Activated CD4-positive, alpha-beta T cell treated with anti-CD3 and anti-CD28 coated beads for 36 hours (primary cell): ENCODE measurements at regions of chr6 and their contacts with region 1.

Region 1: DNA sequence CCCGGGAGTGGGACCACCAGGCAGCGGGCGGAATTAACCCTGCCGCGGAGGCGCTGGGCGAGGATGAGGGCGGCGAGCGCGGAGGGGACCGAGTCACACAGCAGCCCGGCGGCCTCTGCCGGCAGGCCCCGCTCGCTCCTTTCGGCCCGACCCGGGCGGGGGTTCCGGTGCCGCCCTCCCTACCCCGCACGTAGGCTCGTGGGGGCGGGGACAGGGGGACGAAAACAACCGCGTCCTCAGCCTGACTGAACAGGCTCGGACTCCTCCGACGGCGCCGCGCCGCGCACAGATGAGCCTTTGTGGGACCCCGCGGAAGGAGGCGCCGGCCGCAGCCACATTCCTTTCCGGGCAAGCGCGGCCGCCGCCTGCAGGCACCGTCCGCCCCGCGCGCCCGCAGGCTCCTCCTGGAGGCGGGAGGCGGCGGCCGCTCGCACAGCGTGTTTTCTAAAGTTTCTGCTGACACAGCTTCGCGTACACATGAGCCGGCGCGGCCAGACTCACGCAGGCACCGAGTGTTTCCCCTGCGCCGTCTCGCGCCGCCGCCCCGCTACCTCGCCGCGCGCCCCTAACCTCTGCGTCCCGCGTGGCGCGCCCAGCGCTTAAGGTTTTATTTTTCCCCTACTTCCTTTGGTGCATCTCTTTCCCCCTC is 244.3 kb downstream of the ARID1B start:
- DNase-seq: peak; percentile 94
- ATAC-seq: peak; percentile 81
- H3K4me3 Mint-ChIP-seq: peak overlapping the region; percentile 88
- H3K27ac Mint-ChIP-seq: peak overlapping the region; percentile 100
- H3K4me1 Mint-ChIP-seq: peaks cover 53% of the 10 kb centered on the region
- H3K27me3 Mint-ChIP-seq: no peaks in the 10 kb centered on the region

Region 2: DNA sequence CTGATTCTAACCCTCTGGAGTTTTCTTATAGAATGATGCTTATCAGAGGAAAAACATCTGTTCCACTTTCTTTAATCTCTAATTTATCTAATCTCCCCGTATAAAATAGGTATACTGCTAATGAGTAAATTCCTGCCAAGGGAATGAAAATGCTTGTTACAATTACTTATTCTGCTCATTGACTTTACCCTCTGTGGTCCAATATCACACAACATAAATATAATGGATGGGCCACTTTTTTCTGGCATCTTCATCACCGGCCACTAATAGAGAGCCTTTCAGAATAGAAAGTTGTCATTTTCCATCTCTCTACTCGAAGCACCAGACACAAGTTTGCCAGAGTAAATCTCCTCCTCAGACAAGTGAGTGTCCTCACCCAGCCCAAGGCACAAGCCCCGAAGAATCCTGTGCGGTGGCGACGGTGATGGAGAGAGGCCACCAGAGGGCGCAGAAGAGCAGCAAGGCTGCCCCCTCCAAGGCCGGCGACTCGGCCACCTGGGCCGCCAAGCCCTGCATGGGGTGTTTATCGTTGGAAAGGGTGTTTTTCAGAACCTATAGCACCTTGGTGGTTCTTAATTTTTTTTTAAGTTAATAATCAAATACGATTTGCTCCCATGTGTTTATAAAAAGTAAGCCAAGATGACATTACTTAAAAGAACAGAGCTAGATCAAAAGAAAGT is 457.2 kb before region 1 on chr6:
- CTCF ChIA-PET with region 1: interaction called, 3 read pairs
- POLR2A ChIA-PET with region 1: no interaction called
- intact Hi-C with region 1: loop called (anchors 1 to 2 kb)
- DNase-seq: peak; percentile 89
- ATAC-seq: peak; percentile 98
- H3K4me3 Mint-ChIP-seq: no peak overlapping the region
- H3K27ac Mint-ChIP-seq: no peak overlapping the region
- H3K4me1 Mint-ChIP-seq: peaks cover 7% of the 10 kb centered on the region
- H3K27me3 Mint-ChIP-seq: peaks cover 3% of the 10 kb centered on the region

Region 3: GRCh38 chr6:156866220-156867015 is 155.1 kb before region 1 on chr6:
- CTCF ChIA-PET with region 1: no interaction called
- POLR2A ChIA-PET with region 1: interaction called, 6 read pairs
- intact Hi-C with region 1: loop called in 1 of 2 experiments (anchors 5 kb)
- DNase-seq: peak; percentile 65
- ATAC-seq: peak; percentile 75
- H3K4me3 Mint-ChIP-seq: peak overlapping the region; percentile 11
- H3K27ac Mint-ChIP-seq: peak overlapping the region; percentile 65
- H3K4me1 Mint-ChIP-seq: peaks cover 75% of the 10 kb centered on the region
- H3K27me3 Mint-ChIP-seq: no peaks in the 10 kb centered on the region

Region 4: DNA sequence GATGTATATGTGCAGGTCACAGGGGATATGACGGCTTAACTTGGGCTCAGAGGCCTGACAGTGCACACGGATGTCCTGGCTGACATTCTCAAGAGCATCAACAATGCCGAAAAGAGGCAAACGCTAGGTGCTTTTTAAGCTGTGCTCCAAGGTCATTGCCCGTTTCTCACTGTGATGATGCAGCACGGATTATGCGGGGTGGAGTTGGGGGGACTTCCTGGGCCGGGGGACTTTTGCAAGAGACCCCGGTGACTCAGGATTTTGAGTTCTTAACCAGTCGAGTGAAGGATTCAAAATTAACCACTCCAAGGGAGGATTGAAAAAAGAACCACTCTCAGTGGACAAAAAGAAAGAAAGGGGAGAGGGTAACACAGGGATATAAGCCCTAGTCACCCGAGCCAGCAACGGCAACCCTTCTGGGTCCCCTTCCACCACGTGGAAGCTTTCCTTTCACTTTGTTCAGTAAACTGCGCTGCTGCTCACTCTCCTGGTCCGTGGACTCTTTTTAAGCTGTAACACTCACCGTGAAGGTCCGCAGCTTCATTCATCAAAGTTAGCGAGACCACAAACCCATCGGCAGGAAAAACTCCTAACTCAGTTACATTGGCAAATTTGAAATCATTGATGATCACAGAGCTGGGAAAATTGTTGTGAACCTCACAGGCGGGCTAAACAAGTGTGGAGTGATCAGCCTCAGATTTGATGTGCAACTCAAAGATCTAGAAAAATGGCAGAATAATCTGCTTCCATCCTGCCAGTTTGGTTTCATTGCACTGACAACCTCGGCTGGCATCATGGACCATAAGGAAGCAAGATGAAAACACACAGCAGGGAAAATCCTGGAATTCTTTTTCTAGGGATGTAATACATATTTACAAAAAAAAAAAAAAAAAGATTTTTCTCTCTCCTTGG is 45.0 kb before region 1 on chr6:
- CTCF ChIA-PET with region 1: interaction called, 3 read pairs
- POLR2A ChIA-PET with region 1: no interaction called
- intact Hi-C with region 1: loop called in 1 of 2 experiments (anchors 2 kb)
- DNase-seq: peak; percentile 25
- ATAC-seq: peak; percentile 25
- H3K4me3 Mint-ChIP-seq: peak overlapping the region; percentile 58
- H3K27ac Mint-ChIP-seq: peak overlapping the region; percentile 47
- H3K4me1 Mint-ChIP-seq: peaks cover 86% of the 10 kb centered on the region
- H3K27me3 Mint-ChIP-seq: no peaks in the 10 kb centered on the region

Region 5: GRCh38 chr6:157099912-157100593 is 78.6 kb after region 1 on chr6:
- CTCF ChIA-PET with region 1: no interaction called
- POLR2A ChIA-PET with region 1: interaction called, 3 read pairs
- intact Hi-C with region 1: loop called in 1 of 2 experiments (anchors 2 kb)
- DNase-seq: peak; percentile 72
- ATAC-seq: peak; percentile 98
- H3K4me3 Mint-ChIP-seq: peak overlapping the region; percentile 23
- H3K27ac Mint-ChIP-seq: peak overlapping the region; percentile 83
- H3K4me1 Mint-ChIP-seq: peaks cover 56% of the 10 kb centered on the region
- H3K27me3 Mint-ChIP-seq: no peaks in the 10 kb centered on the region

Region 6: GRCh38 chr6:157158897-157159296 is 137.4 kb after region 1 on chr6:
- CTCF ChIA-PET with region 1: no interaction called
- POLR2A ChIA-PET with region 1: no interaction called
- intact Hi-C with region 1: no loop called
- DNase-seq: no peak
- ATAC-seq: no peak
- H3K4me3 Mint-ChIP-seq: no peak overlapping the region
- H3K27ac Mint-ChIP-seq: no peak overlapping the region
- H3K4me1 Mint-ChIP-seq: no peaks in the 10 kb centered on the region
- H3K27me3 Mint-ChIP-seq: no peaks in the 10 kb centered on the region

Region 7: GRCh38 chr6:157379656-157380454 is 358.4 kb after region 1 on chr6:
- CTCF ChIA-PET with region 1: no interaction called
- POLR2A ChIA-PET with region 1: no interaction called
- intact Hi-C with region 1: loop called in 1 of 2 experiments (anchors 5 kb)
- DNase-seq: peak; percentile 93
- ATAC-seq: peak; percentile 87
- H3K4me3 Mint-ChIP-seq: peak overlapping the region; percentile 73
- H3K27ac Mint-ChIP-seq: peak overlapping the region; percentile 32
- H3K4me1 Mint-ChIP-seq: peaks cover 34% of the 10 kb centered on the region
- H3K27me3 Mint-ChIP-seq: peaks cover 8% of the 10 kb centered on the region

Region 8: GRCh38 chr6:158762787-158763433 is 1741.4 kb after region 1 on chr6:
- CTCF ChIA-PET with region 1: no interaction called
- POLR2A ChIA-PET with region 1: no interaction called
- intact Hi-C with region 1: no loop called
- DNase-seq: no peak
- ATAC-seq: no peak
- H3K4me3 Mint-ChIP-seq: no peak overlapping the region
- H3K27ac Mint-ChIP-seq: peak overlapping the region; percentile 11
- H3K4me1 Mint-ChIP-seq: no peaks in the 10 kb centered on the region
- H3K27me3 Mint-ChIP-seq: no peaks in the 10 kb centered on the region